Left lung (tissue), 14 donors: ENCODE measurements at regions of chr10 and their contacts with region 1.

Region 1: DNA sequence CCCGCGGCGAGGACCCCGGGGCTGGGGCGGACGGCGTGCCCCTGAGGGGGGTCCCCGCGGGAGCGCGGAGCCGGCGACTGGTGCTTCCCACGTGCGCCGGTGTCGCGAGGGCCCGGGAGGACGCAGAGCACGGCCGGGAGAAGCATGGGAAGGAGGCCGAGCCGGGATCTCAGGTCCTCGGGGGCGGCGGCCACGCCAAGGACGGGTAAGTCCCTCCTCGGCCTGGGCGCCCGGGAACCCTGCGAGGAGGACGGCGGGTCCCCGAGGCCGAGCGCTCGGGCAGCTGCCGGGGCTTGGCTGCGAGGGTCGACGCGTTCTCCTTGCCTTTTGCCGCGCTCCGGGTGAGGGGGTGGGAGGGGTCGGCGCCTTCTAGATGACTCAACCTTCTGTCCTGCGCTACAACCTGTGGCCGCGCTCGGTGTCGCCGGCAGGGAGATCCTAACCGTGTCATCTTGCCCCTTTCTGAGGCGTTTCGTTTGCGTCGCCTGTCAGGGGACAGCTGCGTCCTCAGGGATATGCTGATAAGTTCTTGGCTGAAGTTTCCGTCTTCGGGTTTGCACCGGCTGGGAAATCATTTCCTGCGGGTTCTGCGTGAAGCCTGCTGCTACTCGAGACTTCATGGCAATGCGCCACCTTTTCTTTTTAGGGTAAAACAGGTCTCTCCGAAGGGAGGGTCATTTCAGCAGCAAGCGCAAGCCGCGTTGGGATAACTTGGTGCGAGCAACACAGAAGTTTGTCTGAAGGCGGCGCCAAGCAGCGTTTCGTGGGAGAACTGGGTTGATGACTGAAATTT is 529 bp downstream of the TASOR2 start:
- DNase-seq: peak; percentile 46 to 84 (median 72)
- ATAC-seq: peak; percentile 70
- H3K4me3 ChIP-seq: peak overlapping the region; percentile 96 to 99
- H3K27ac ChIP-seq: peak overlapping the region; percentile 84 to 96
- H3K4me1 ChIP-seq: peaks cover 8 to 24% of the 10 kb centered on the region in 2 donors
- H3K27me3 ChIP-seq: no peaks in the 10 kb centered on the region
- CTCF ChIP-seq: peak in 1 of 2 donors; percentile 41

Region 2: DNA sequence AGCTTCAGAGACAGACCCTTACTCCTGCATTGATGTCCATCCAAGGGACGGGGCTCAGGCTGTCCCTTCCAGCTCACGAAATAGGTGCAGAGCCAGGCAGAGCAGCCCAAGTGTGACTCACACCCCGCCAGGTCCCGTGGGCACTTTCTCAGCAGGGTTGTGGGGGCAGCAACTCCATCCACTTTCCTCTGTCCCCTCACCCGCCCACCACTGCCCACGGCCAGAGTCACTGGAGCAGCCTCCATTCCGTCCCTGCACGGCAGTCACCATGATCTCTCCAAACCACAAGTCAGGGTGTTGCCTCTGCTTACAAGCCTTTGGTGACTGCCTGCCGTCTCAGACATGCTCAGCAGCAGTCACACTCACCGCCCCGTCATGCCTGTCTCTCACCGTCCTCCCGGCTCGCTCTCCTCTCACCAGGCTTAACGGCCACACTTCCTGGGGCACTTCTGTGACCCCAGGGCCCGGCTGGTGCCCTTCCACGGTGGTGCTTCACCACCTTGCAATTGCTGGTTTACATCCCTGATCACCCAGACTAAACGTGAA is 121.1 kb before region 1 on chr10:
- intact Hi-C with region 1: no loop called
- DNase-seq: no peak
- ATAC-seq: no peak
- H3K4me3 ChIP-seq: no peak overlapping the region
- H3K27ac ChIP-seq: no peak overlapping the region
- H3K4me1 ChIP-seq: peaks cover 0 to 3% of the 10 kb centered on the region in 2 donors
- H3K27me3 ChIP-seq: no peaks in the 10 kb centered on the region
- CTCF ChIP-seq: no peak

Region 3: GRCh38 chr10:5583525-5584175 is 101.5 kb before region 1 on chr10:
- intact Hi-C with region 1: no loop called
- DNase-seq: peak in 3 of 4 donors; percentile 56 to 83 (median 82)
- ATAC-seq: peak; percentile 72
- H3K4me3 ChIP-seq: no peak overlapping the region
- H3K27ac ChIP-seq: no peak overlapping the region
- H3K4me1 ChIP-seq: peaks cover 0 to 7% of the 10 kb centered on the region in 2 donors
- H3K27me3 ChIP-seq: no peaks in the 10 kb centered on the region
- CTCF ChIP-seq: no peak

Region 4: GRCh38 chr10:5873515-5873995 is 188.4 kb after region 1 on chr10:
- intact Hi-C with region 1: loop called in 1 of 2 experiments (anchors 5 kb)
- DNase-seq: peak in 3 of 4 donors; percentile 44 to 77 (median 68)
- ATAC-seq: peak; percentile 96
- H3K4me3 ChIP-seq: peak overlapping the region in 1 of 2 donors; percentile 8
- H3K27ac ChIP-seq: no peak overlapping the region
- H3K4me1 ChIP-seq: peaks cover 0 to 3% of the 10 kb centered on the region in 2 donors
- H3K27me3 ChIP-seq: no peaks in the 10 kb centered on the region
- CTCF ChIP-seq: peak; percentile 71 to 73

Region 5: GRCh38 chr10:5948999-5949759 is 264.0 kb after region 1 on chr10:
- intact Hi-C with region 1: no loop called
- DNase-seq: peak in 3 of 4 donors; percentile 68 to 79 (median 73)
- ATAC-seq: peak; percentile 55
- H3K4me3 ChIP-seq: no peak overlapping the region
- H3K27ac ChIP-seq: peak overlapping the region in 1 of 2 donors; percentile 57
- H3K4me1 ChIP-seq: peaks cover 11 to 69% of the 10 kb centered on the region in 2 donors
- H3K27me3 ChIP-seq: no peaks in the 10 kb centered on the region
- CTCF ChIP-seq: peak; percentile 42